Caco-2 (cell line): ENCODE measurements at regions of chr5 and their contacts with region 1.

Region 1: GRCh38 chr5:8756498-8757084 is 789.3 kb downstream of the SEMA5A start:
- DNase-seq: peak in 1 of 2 experiments; percentile 33
- H3K4me3 ChIP-seq: no peak overlapping the region
- H3K4me3 Mint-ChIP-seq: no peak overlapping the region
- H3K27ac Mint-ChIP-seq: no peak overlapping the region
- H3K4me1 ChIP-seq: no peaks in the 10 kb centered on the region
- H3K4me1 Mint-ChIP-seq: no peaks in the 10 kb centered on the region
- H3K27me3 ChIP-seq: no peaks in the 10 kb centered on the region
- H3K27me3 Mint-ChIP-seq: peaks cover 10% of the 10 kb centered on the region
- CTCF ChIP-seq: peak in 1 of 2 experiments; percentile 45

Region 2: GRCh38 chr5:8842971-8843551 is 86.5 kb after region 1 on chr5:
- CTCF ChIA-PET with region 1: interaction called, 3 read pairs
- POLR2A ChIA-PET with region 1: no interaction called
- intact Hi-C with region 1: loop called (anchors 1 kb)
- DNase-seq: peak in 1 of 2 experiments; percentile 12
- H3K4me3 ChIP-seq: no peak overlapping the region
- H3K4me3 Mint-ChIP-seq: no peak overlapping the region
- H3K27ac Mint-ChIP-seq: no peak overlapping the region
- H3K4me1 ChIP-seq: no peaks in the 10 kb centered on the region
- H3K4me1 Mint-ChIP-seq: no peaks in the 10 kb centered on the region
- H3K27me3 ChIP-seq: no peaks in the 10 kb centered on the region
- H3K27me3 Mint-ChIP-seq: peaks cover 7% of the 10 kb centered on the region
- CTCF ChIP-seq: peak in 1 of 2 experiments; percentile 37

Region 3: GRCh38 chr5:9156282-9156681 is 399.7 kb after region 1 on chr5:
- CTCF ChIA-PET with region 1: no interaction called
- POLR2A ChIA-PET with region 1: no interaction called
- intact Hi-C with region 1: loop called (anchors 5 kb)
- DNase-seq: peak; percentile 69 to 73
- H3K4me3 ChIP-seq: no peak overlapping the region
- H3K4me3 Mint-ChIP-seq: no peak overlapping the region
- H3K27ac Mint-ChIP-seq: no peak overlapping the region
- H3K4me1 ChIP-seq: peaks cover 13% of the 10 kb centered on the region
- H3K4me1 Mint-ChIP-seq: peaks cover 16% of the 10 kb centered on the region
- H3K27me3 ChIP-seq: no peaks in the 10 kb centered on the region
- H3K27me3 Mint-ChIP-seq: no peaks in the 10 kb centered on the region
- CTCF ChIP-seq: peak; percentile 64 to 84